Calu3 (cell line): ENCODE measurements at regions of chr16 and their contacts with region 1.

Region 1: DNA sequence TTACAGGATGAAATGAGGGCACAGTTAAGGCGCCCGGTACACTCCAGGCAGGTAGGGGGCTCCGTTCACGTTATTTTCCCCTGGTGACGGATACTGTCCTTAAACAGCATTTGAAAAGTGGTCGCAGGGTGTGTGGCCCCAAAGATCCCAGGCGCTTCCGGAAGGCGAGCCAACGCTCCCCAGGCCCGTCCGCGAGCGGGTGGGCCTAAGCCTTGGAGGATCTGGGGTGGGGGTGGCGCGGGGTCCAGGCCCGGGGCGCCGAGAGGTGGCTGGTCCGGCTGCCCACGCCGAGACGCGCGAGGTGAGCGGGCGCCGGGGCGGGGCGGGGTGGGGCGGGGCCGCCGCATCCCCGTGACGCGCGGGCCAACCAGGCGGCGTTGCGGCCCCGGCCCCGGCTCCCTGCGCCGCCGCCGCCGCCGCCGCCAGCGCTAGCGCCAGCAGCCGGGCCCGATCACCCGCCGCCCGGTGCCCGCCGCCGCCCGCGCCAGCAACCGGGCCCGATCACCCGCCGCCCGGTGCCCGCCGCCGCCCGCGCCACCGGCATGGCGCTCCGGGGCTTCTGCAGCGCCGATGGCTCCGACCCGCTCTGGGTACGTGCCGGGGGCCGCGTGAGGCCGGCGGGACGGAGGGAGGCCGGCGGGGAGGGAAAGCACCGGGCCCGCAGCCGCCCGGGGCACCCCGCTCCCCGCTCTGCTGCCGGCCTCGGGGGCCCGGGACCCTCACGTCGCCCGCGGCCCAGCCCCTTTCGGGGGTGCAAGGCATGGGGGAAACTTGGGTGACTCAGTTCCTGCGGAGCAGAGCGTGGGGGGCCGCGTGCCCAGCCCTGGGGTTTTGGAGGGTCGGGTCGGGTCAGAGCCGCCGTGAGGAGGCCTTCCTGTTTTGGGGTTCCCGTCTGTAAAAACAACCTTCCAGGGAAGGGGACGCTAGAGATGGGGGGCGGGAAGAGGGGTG is at the start of gene ABCC1:
- DNase-seq: peak; percentile 59
- H3K4me3 Mint-ChIP-seq: peak within 1 kb of the TSS; percentile 90
- H3K27ac Mint-ChIP-seq: peak within 1 kb of the TSS; percentile 79
- H3K4me1 Mint-ChIP-seq: peaks cover 48% of the 10 kb centered on the region
- H3K27me3 Mint-ChIP-seq: no peaks in the 10 kb centered on the region
- CTCF ChIP-seq: no peak
- total RNA-seq, gene ABCC1: 46.3 and 46.4 TPM in 2 replicates

Region 2: DNA sequence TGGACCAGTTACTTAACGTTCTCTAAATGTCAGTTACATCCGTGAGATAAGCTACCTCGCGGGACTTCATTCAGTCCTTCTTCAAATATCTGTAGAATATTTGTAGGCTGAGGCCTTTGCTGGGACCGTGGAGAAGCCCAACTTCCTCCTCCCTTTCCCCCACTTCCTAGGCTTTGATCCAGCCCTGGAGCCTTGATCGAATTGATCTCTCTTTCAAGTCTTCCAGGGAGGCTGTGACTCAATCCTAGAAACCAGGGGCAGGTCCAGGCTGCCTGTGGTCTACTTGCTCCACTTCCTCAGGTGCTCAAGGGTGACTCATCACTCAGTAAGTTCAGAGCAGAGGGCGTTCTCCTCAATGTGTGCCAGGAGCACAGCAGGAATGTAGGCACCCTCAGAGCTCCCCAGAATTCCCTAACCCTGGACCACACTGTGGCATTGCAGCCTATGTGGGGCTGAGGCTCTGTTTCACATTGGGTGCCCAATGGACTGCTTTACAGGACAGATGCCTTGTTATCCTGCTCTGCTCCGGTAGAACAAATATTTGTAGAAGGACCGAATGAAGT is 49.9 kb before region 1 on chr16:
- CTCF ChIA-PET with region 1: no interaction called
- intact Hi-C with region 1: loop called (anchors 5 kb)
- DNase-seq: peak; percentile 91
- H3K4me3 Mint-ChIP-seq: peak overlapping the region; percentile 9
- H3K27ac Mint-ChIP-seq: peak overlapping the region; percentile 91
- H3K4me1 Mint-ChIP-seq: peaks cover 19% of the 10 kb centered on the region
- H3K27me3 Mint-ChIP-seq: no peaks in the 10 kb centered on the region
- CTCF ChIP-seq: no peak

Region 3: GRCh38 chr16:15961060-15961511 is 11.6 kb after region 1 on chr16:
- CTCF ChIA-PET with region 1: no interaction called
- intact Hi-C with region 1: no loop called
- DNase-seq: no peak
- H3K4me3 Mint-ChIP-seq: no peak overlapping the region
- H3K27ac Mint-ChIP-seq: no peak overlapping the region
- H3K4me1 Mint-ChIP-seq: peaks cover 10% of the 10 kb centered on the region
- H3K27me3 Mint-ChIP-seq: no peaks in the 10 kb centered on the region
- CTCF ChIP-seq: no peak

Region 4: GRCh38 chr16:15996432-15997109 is 47.1 kb after region 1 on chr16:
- CTCF ChIA-PET with region 1: no interaction called
- intact Hi-C with region 1: loop called (anchors 5 kb)
- DNase-seq: peak; percentile 55
- H3K4me3 Mint-ChIP-seq: peak overlapping the region; percentile 22
- H3K27ac Mint-ChIP-seq: peak overlapping the region; percentile 86
- H3K4me1 Mint-ChIP-seq: peaks cover 29% of the 10 kb centered on the region
- H3K27me3 Mint-ChIP-seq: no peaks in the 10 kb centered on the region
- CTCF ChIP-seq: no peak

Region 5: DNA sequence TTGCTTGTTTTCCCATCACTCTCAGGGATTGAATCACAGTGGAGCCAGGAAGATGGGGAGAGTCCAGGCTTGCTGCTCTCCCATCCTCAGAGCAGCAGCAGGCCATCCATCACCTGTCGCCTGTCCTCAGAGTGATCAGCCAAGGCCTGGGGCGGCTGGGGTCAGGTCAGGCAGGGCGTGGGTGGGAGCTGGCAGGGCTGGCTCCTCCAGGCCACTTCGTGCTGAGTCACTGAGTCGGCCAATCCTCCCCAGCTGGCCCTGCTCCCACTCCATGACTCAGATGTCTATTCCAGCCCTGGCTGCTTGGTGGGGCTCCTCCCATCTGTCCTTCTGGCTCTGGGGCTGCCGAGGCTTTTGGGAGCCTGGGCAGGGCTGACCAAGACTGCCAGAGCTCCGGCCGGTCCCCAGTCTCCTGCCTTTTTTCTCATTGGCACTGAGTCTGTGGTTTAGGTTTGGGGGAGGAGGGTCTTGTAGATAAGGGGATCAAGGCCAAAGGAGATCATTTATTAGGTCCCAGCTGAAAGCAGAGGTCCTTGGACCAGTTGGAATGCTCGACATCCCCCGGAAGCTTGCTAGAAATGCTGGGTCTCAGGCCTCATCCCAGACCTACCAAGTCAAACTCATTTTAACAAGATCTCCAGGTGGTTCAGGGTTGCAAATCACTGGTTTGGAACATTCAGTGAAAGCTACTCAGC is 72.7 kb after region 1 on chr16:
- CTCF ChIA-PET with region 1: interaction called, 8 read pairs
- intact Hi-C with region 1: loop called (anchors 5 kb)
- DNase-seq: peak; percentile 93
- H3K4me3 Mint-ChIP-seq: peak overlapping the region; percentile 44
- H3K27ac Mint-ChIP-seq: peak overlapping the region; percentile 13
- H3K4me1 Mint-ChIP-seq: peaks cover 61% of the 10 kb centered on the region
- H3K27me3 Mint-ChIP-seq: no peaks in the 10 kb centered on the region
- CTCF ChIP-seq: no peak

Region 6: GRCh38 chr16:16073891-16074881 is 124.7 kb after region 1 on chr16:
- CTCF ChIA-PET with region 1: no interaction called
- intact Hi-C with region 1: loop called (anchors 5 kb)
- DNase-seq: peak; percentile 90
- H3K4me3 Mint-ChIP-seq: peak overlapping the region; percentile 11
- H3K27ac Mint-ChIP-seq: peak overlapping the region; percentile 84
- H3K4me1 Mint-ChIP-seq: peaks cover 39% of the 10 kb centered on the region
- H3K27me3 Mint-ChIP-seq: no peaks in the 10 kb centered on the region
- CTCF ChIP-seq: no peak

Region 7: DNA sequence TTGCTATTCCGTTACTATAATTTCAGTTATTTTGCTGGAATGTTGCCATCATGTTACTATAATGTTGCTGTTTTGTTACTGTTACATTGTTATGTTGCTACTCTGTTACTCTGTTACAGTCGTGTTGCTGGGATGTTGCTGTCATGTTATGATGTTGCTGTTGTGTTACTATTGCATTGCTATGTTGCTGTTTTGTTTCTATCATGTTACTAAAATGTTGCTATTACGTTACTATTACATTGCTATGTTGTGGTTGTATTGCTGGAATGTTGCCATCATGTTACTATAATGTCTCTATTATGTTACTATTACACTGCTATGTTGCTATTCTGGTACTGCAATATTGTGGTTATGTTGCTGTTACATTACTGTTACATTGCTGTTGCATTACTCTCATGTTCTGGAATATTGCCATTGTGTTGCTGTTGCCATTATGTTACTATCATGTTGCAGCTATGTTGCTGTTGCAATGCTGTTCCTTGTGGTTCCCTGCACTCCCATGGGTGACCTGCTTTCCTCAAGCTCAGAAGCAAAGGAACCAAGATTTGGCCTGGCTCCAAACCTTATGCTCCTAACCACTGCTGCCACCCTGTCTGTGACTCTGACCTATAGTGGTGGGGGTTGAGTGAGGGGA is 209.4 kb after region 1 on chr16:
- CTCF ChIA-PET with region 1: no interaction called
- intact Hi-C with region 1: no loop called
- DNase-seq: no peak
- H3K4me3 Mint-ChIP-seq: no peak overlapping the region
- H3K27ac Mint-ChIP-seq: no peak overlapping the region
- H3K4me1 Mint-ChIP-seq: no peaks in the 10 kb centered on the region
- H3K27me3 Mint-ChIP-seq: peaks cover 15% of the 10 kb centered on the region
- CTCF ChIP-seq: no peak